ENCODE measurements at regions of chr6 and their contacts with region 1.

Region 1: DNA sequence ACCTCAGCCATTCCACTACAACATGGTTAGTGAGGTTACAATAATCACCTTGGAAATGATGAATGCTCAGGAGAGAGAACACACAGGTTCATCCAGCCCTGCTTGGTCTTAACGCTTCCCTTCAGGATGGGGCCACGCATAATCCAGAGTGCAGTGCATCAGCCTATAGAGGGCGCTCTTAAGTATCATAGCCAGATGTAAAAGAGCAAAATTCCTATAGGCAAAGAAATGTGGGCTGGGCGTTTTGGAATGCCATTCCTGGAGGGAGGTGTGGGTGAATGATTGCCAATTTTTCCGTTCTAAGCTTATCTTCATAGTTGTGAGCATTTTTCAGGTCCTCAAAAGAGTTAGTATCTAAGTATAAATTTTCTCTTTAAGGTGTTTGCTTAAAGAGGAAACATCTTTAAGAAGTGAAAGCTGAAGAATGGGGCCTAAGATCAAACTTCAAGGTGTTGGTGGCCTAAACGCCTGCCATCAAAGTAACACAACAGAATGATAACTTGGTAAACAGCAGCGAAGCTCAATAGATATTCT is 1.8 kb downstream of the RIPOR2 start:
- DNase-seq: no peak
- CTCF ChIP-seq: peak; percentile 88

Region 2: GRCh38 chr6:24855395-24856245 is 78.3 kb before region 1 on chr6:
- CTCF ChIA-PET with region 1: interaction called, 16 read pairs
- POLR2A ChIA-PET with region 1: no interaction called
- DNase-seq: peak; percentile 78
- CTCF ChIP-seq: peak; percentile 81

Region 3: GRCh38 chr6:24883618-24884017 is 50.3 kb before region 1 on chr6:
- CTCF ChIA-PET with region 1: interaction called, 28 read pairs
- POLR2A ChIA-PET with region 1: no interaction called
- DNase-seq: no peak
- CTCF ChIP-seq: no peak

Region 4: GRCh38 chr6:24902782-24903181 is 31.2 kb before region 1 on chr6:
- CTCF ChIA-PET with region 1: interaction called, 94 read pairs
- POLR2A ChIA-PET with region 1: no interaction called
- DNase-seq: no peak
- CTCF ChIP-seq: no peak

Region 5: GRCh38 chr6:24919004-24919892 is 14.7 kb before region 1 on chr6:
- CTCF ChIA-PET with region 1: interaction called, 89 read pairs
- POLR2A ChIA-PET with region 1: interaction called, 3 read pairs
- DNase-seq: no peak
- CTCF ChIP-seq: no peak

Region 6: DNA sequence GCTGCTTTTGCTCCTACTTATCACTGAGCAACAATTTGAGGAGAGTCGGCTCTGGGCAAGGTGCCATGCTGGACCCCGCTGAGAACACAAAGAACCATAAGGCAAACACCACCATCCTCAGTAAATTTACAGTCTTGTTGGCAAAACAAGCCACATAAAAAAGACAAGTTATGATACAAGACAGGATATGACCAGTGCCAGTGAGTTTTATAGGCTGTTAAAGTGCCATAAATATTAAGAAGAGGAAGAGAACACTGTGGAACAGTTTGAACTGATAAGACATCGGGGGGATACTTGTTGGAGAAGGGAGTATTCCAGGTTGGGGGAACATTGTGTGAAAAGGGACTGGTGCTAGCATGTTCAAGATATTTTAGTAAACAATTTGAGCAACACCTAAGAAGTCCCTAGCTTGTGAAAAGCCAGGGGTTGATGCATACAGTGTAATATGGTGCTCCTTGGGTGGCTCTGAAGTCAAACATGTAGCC is 27.1 kb after region 1 on chr6:
- CTCF ChIA-PET with region 1: interaction called, 25 read pairs
- POLR2A ChIA-PET with region 1: no interaction called
- DNase-seq: no peak
- CTCF ChIP-seq: no peak

Region 7: GRCh38 chr6:25027221-25027916 is 93.4 kb after region 1 on chr6:
- CTCF ChIA-PET with region 1: interaction called, 31 read pairs
- POLR2A ChIA-PET with region 1: no interaction called
- DNase-seq: peak; percentile 87
- CTCF ChIP-seq: peak; percentile 79